ENCODE measurements at regions of chr7 and their contacts with region 1.

Region 1: GRCh38 chr7:4681886-4682620 is at the start of gene FOXK1:
- DNase-seq: no peak
- H3K4me3 ChIP-seq: peak within 1 kb of the TSS; percentile 80 to 95 (median 87)
- H3K27ac ChIP-seq: peak within 1 kb of the TSS; percentile 95 to 98 (median 96)
- H3K4me1 ChIP-seq: peaks cover 21 to 50% (median 21%) of the 10 kb centered on the region in 3 donors
- H3K27me3 ChIP-seq: no peaks in the 10 kb centered on the region
- CTCF ChIP-seq: peak in 1 of 6 experiments; percentile 13
- POLR2A ChIP-seq: peak in 3 of 4 donors; percentile 43 to 62 (median 47)
- total RNA-seq, gene FOXK1: 11.9 to 25.7 (median 15.9) TPM

Region 2: DNA sequence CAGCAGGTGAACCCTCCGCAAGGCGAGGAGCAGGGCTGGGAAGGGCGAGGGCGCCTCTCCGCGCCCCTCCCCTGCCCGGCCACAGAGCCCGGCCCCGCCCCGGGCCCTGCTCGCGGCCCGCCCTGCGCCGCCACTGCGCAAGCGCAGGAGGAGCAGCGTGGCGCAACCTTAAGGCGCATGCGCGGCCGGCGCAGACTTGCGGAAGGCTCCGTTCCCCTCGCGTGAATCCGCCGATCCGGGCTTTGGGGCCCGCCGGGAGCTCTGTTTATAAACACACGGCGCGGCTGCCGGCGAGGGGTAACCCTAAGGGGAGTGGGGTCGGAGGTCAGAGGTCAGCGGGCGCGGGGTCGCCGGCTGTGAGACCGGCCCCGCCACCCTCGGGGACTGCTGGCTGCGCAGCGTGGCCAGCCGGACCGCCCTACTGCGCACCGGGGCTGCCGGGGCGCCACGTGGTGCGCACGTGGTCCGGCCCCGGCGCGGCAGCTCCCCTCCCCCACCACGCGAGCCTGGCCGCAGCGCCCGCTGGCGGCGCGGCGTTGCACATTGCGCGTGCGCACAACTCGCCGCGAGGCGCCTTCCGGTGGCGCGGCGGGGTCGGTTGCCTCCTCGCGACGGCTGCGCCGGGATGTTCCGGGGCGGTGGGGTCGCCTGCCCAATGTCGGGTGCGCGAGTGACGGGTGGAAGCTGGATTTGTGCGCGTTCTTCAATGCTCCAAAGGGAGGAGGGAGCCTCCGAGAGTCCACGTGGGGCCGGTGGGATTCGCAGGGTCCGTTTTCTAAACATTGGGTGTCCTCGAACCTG is 40.2 kb before region 1 on chr7:
- intact Hi-C with region 1: loop called (anchors 2 kb)
- DNase-seq: peak; percentile 68
- H3K4me3 ChIP-seq: peak overlapping the region; percentile 44 to 90 (median 62)
- H3K27ac ChIP-seq: peak overlapping the region; percentile 80 to 95 (median 89)
- H3K4me1 ChIP-seq: peaks cover 0 to 17% (median 9%) of the 10 kb centered on the region in 3 donors
- H3K27me3 ChIP-seq: no peaks in the 10 kb centered on the region
- CTCF ChIP-seq: peak in 5 of 6 experiments; percentile 14 to 79 (median 55)
- POLR2A ChIP-seq: peak in 3 of 4 donors; percentile 66 to 88 (median 87)

Region 3: GRCh38 chr7:4753711-4754432 is 71.8 kb after region 1 on chr7:
- intact Hi-C with region 1: loop called (anchors 5 kb)
- DNase-seq: no peak
- H3K4me3 ChIP-seq: no peak overlapping the region
- H3K27ac ChIP-seq: peak overlapping the region in 1 of 4 donors; percentile 10
- H3K4me1 ChIP-seq: peaks cover 4 to 22% (median 6%) of the 10 kb centered on the region in 3 donors
- H3K27me3 ChIP-seq: no peaks in the 10 kb centered on the region
- CTCF ChIP-seq: peak; percentile 88 to 95 (median 92)
- POLR2A ChIP-seq: no peak

Measured in esophagus squamous epithelium (tissue), 5 donors.